ENCODE measurements at regions of chr7 and their contacts with region 1.

Region 1: GRCh38 chr7:44748045-44748947 is at the start of gene ZMIZ2:
- DNase-seq: peak; percentile 94
- H3K4me3 ChIP-seq: peak within 1 kb of the TSS; percentile 94
- H3K27ac ChIP-seq: peak within 1 kb of the TSS; percentile 66
- H3K4me1 ChIP-seq: peaks cover 38% of the 10 kb centered on the region
- CTCF ChIP-seq: no peak
- total RNA-seq, gene ZMIZ2: 17.2 and 18.0 TPM in 2 replicates

Region 2: DNA sequence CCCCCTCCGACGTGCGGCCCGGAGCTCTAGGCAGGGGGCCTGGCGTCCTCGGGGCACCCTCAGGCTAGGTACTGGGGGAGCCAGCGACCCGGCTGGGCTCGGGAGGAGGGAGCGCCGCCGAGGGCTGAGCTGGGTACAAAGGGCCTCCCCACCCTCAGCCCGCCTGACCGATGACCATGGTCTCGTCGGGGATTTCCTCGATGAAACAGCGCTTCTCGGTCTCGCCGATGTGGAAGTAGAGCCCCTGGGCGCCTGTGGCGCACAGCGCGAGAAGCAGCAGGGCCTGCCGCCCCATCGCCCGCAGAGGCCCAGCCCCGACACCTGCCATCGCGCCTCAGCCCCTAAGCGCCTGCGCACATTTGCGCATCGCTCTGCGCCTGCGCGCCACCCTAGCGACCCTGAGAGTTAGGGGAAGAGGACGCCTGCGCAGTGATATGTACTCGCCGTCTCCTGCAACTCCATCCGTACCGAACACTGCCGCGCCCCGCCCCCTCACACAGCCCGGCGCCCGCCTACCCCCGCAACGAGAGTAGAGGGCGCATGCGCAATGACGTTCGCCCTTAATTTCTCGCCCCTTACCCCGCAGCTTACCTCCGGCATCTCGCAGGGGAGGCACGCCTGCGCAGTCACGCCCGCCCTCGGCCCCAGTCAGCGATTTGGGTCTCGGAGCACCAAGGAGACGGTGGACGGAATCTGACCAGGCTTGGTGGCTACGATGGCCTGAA is 166.3 kb before region 1 on chr7 and contains the start of gene TMED4:
- CTCF ChIA-PET with region 1: no interaction called
- POLR2A ChIA-PET with region 1: interaction called, 6 read pairs
- intact Hi-C with region 1: loop called (anchors 2 kb)
- DNase-seq: peak; percentile 99
- H3K4me3 ChIP-seq: peak within 1 kb of the TSS; percentile 84
- H3K27ac ChIP-seq: peak within 1 kb of the TSS; percentile 68
- H3K4me1 ChIP-seq: peaks cover 19% of the 10 kb centered on the region
- CTCF ChIP-seq: no peak
- total RNA-seq, gene TMED4: 64.9 and 80.5 TPM in 2 replicates

Region 3: GRCh38 chr7:44606450-44607254 is 141.6 kb before region 1 on chr7 and contains the start of gene OGDH:
- CTCF ChIA-PET with region 1: no interaction called
- POLR2A ChIA-PET with region 1: interaction called, 6 read pairs
- intact Hi-C with region 1: loop called (anchors 1 kb)
- DNase-seq: peak; percentile 99
- H3K4me3 ChIP-seq: peak within 1 kb of the TSS; percentile 77
- H3K27ac ChIP-seq: peak within 1 kb of the TSS; percentile 71
- H3K4me1 ChIP-seq: peaks cover 33% of the 10 kb centered on the region
- CTCF ChIP-seq: no peak
- total RNA-seq, gene OGDH: 32.6 and 47.6 TPM in 2 replicates

Region 4: GRCh38 chr7:44796431-44797328 is 48.4 kb after region 1 on chr7 and contains the start of gene PPIA:
- CTCF ChIA-PET with region 1: no interaction called
- POLR2A ChIA-PET with region 1: interaction called, 4 read pairs
- intact Hi-C with region 1: loop called (anchors 1 kb)
- DNase-seq: peak; percentile 100
- H3K4me3 ChIP-seq: peak within 1 kb of the TSS; percentile 99
- H3K27ac ChIP-seq: peak within 1 kb of the TSS; percentile 82
- H3K4me1 ChIP-seq: peaks cover 24% of the 10 kb centered on the region
- CTCF ChIP-seq: no peak
- total RNA-seq, gene PPIA: 2,827 and 2,935 TPM in 2 replicates

Measured in OCI-LY7 (cell line).